BJ (cell line): ENCODE measurements at regions of chr1 and their contacts with region 1.

Region 1: DNA sequence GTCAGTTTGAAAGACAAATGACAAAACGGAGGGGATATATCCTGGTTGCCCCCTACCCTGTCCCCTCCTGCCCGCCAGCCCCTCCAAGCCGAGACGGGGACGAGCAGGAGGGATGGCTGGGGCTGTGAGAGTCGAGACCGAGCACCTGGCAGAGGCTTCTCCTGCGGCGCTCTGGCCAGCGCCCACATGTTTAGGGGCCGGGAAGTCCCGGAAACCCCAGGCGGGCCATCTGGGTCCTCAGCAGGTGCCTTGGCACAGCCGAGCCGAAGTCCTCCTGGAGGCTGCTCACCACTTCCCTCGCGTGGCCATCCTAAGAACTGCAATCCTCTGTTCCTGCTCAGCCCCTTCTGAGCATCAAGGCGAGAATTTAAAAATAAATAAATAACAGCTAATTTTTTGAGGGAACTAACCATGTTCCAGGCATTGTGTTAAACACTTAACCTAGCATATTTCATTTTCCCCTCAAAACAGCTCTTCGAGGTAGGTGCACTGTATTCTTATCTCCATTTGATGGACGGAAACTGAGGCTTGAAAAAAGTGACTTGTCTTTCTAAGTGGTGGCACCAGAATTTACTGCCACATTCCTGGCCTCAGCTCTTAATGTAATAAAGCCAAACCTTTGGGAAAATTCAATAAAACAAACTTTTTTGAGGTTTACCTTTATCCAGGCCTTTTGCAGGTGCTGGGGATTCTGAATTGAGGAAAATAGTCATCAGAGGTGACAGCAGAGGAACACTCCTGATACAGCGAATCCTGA is 3.5 kb upstream of the RIMS3 start:
- DNase-seq: no peak
- H3K4me3 ChIP-seq: no peak overlapping the region
- H3K27me3 ChIP-seq: peaks cover 9% of the 10 kb centered on the region; the same call in 1 of the 2 replicates
- CTCF ChIP-seq: peak; percentile 98

Region 2: GRCh38 chr1:40691538-40692428 is 22.8 kb after region 1 on chr1 and contains the start of gene NFYC:
- CTCF ChIA-PET with region 1: interaction called, 16 read pairs
- POLR2A ChIA-PET with region 1: interaction called, 4 read pairs
- DNase-seq: peak; percentile 84
- H3K4me3 ChIP-seq: peak within 1 kb of the TSS; percentile 97
- H3K27me3 ChIP-seq: no peaks in the 10 kb centered on the region
- CTCF ChIP-seq: no peak
- polyA plus RNA-seq, gene NFYC: 35.0 and 63.2 TPM in 2 replicates